Astrocyte of the cerebellum (primary cell): ENCODE measurements at regions of chr1 and their contacts with region 1.

Region 1: DNA sequence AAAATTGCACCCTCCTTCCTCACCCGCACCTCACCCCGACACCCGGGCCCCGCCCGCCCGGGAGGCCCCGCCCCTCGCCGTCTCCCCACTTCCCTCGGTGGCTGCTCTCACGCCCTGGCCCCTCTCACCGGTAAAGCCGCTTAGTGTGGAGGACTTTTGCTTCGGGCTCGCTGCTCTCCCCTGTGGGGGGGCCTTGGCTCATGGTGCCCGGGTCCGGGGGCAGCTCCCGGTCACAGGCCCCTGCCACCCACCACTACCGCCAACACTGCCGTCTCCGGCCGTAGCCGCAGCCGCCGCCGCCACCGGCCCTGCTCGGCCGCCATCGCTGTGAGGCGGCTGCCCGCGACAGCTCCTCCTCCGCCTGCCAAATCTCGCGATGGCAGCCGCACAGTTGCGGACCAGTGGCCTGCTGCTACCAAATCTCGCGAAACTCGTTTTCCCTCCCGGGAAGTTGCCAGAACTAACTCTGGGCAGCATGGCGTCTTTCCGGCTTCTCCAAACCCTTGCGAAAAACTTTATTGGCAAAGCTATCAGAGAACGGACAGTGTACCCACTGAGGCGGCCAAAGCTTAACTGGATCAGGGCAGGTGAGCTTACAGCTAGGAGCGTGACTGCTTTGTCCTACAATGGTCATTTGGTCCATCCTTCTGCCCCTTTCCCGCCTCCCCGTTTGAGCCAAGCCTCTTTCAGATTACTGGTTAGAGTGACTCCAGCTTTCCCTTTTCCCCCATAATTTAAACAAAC is at the start of gene SMG5:
- DNase-seq: peak; percentile 98
- H3K4me3 ChIP-seq: peak within 1 kb of the TSS; percentile 64
- CTCF ChIP-seq: no peak

Region 2: GRCh38 chr1:156136970-156137483 is 145.6 kb before region 1 on chr1:
- in situ Hi-C with region 1: loop called (anchors 5 kb)
- DNase-seq: no peak
- H3K4me3 ChIP-seq: no peak overlapping the region
- CTCF ChIP-seq: peak; percentile 22

Region 3: GRCh38 chr1:156319664-156320063 is 37.0 kb after region 1 on chr1:
- in situ Hi-C with region 1: no loop called
- DNase-seq: peak; percentile 23
- H3K4me3 ChIP-seq: no peak overlapping the region
- CTCF ChIP-seq: peak; percentile 62

Region 4: DNA sequence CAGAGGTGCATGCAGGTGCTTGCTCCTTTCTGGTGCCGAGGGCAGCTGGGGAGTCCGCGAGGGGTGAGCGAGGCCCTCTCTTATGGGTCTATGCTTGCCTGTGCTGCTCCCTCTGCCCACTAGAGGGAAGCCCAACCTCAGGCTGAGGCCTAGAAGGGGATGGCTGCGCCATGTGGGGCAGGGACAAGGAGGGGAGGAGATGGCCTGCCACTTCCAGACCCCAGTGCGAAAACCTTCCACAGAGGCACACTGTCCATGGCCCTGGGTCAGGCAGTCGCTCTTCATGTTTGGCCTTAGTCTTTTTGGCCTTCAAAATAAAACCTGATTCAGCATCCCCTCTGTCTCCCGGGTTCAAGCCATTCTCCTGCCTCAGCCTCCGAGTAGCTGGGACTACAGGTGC is 100.4 kb after region 1 on chr1:
- in situ Hi-C with region 1: no loop called
- DNase-seq: peak; percentile 18
- H3K4me3 ChIP-seq: no peak overlapping the region
- CTCF ChIP-seq: peak; percentile 91

Region 5: GRCh38 chr1:156836041-156836657 is 553.5 kb after region 1 on chr1:
- in situ Hi-C with region 1: no loop called
- DNase-seq: no peak
- H3K4me3 ChIP-seq: no peak overlapping the region
- CTCF ChIP-seq: no peak